ENCODE measurements at regions of chr10 and their contacts with region 1.

Region 1: GRCh38 chr10:99435986-99436638 is 5.7 kb upstream of the GOT1 start:
- DNase-seq: peak; percentile 72
- ATAC-seq: peak; percentile 46; the same call in 1 of the 2 replicates
- H3K4me3 ChIP-seq: no peak overlapping the region
- H3K27ac ChIP-seq: no peak overlapping the region
- H3K4me1 ChIP-seq: no peaks in the 10 kb centered on the region
- H3K27me3 ChIP-seq: no peaks in the 10 kb centered on the region
- CTCF ChIP-seq: peak; percentile 65

Region 2: DNA sequence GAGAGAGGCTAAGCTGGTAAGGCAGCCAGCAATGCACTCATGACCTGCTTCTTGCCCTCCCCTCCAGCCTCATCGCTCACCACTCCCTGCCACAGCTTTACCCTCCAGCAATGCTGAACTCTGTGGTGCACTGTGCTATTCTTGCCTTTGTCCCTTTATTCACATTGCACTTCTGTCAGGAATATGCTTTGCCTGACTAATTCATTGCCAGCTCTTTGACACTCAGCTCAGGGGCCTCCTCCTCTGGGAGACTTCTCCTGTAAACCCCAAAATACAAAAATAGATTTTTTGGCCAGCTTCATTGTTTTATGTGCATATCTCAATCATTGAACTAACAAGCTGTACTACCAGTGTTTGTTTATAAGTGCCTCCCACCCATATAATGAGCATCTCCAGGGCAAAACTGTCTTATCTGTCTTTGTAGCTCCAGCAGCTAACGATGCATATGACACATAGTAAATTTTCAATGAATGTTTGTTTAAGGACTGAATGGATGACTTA is 98.8 kb before region 1 on chr10:
- CTCF ChIA-PET with region 1: interaction called, 5 read pairs
- POLR2A ChIA-PET with region 1: no interaction called
- intact Hi-C with region 1: loop called (anchors 2 kb)
- DNase-seq: peak; percentile 51
- ATAC-seq: peak; percentile 54
- H3K4me3 ChIP-seq: no peak overlapping the region; the same call in 1 of the 2 replicates
- H3K27ac ChIP-seq: peak overlapping the region; percentile 85
- H3K4me1 ChIP-seq: peaks cover 40% of the 10 kb centered on the region
- H3K27me3 ChIP-seq: no peaks in the 10 kb centered on the region
- CTCF ChIP-seq: no peak

Measured in PC-3 (cell line).